ENCODE measurements at regions of chr4 and their contacts with region 1.

Region 1: GRCh38 chr4:158850800-158851644 is 82.2 kb downstream of the FNIP2 start:
- DNase-seq: peak; percentile 70
- H3K4me3 ChIP-seq: no peak overlapping the region
- H3K27ac ChIP-seq: peak overlapping the region in 1 of 2 donors; percentile 20
- H3K4me1 ChIP-seq: no peaks in the 10 kb centered on the region
- H3K27me3 ChIP-seq: no peaks in the 10 kb centered on the region
- CTCF ChIP-seq: peak in 3 of 4 experiments; percentile 81 to 88 (median 81)
- POLR2A ChIP-seq: no peak

Region 2: DNA sequence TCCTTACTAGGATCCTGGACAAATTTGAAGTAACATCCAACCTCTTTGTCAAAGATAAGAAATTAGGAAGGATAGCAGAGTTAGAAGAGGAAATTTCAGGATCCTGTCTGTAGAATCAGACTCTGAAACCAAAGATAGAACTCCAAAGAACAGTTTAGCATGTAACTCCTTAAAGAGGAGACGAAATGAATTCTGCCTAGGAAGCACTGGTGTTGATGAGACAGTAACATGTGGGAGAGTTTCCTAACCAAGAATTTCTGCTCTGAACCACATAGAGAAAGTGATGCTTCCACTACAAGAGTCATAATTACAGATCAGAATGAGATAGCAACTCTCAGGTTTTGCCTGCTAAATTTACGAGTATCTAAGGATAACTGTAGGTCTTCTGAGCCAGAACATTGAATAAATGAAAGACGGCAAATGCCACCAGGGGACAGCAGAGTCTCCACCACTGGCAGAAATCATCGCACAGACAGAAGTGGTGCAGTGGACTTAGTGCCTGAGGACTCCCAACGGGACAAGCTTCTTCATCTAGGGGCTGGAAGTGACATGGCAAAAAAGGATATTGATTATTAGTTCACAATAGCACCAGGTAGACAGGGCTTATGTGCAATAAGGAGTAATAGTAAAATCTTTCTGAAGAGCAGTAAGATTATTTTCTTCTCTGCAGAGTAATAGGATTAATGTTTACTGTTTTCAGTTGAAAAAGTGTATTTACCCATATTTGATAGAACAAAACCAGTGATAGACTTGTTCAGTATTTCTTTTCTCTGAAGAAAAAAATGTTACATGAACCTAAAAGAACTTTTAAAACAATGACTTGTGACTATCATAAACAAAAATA is 121.1 kb before region 1 on chr4:
- intact Hi-C with region 1: loop called (anchors 2 kb)
- DNase-seq: peak; percentile 69
- H3K4me3 ChIP-seq: no peak overlapping the region
- H3K27ac ChIP-seq: no peak overlapping the region
- H3K4me1 ChIP-seq: no peaks in the 10 kb centered on the region
- H3K27me3 ChIP-seq: no peaks in the 10 kb centered on the region
- CTCF ChIP-seq: peak; percentile 67 to 90 (median 88)
- POLR2A ChIP-seq: no peak

Region 3: DNA sequence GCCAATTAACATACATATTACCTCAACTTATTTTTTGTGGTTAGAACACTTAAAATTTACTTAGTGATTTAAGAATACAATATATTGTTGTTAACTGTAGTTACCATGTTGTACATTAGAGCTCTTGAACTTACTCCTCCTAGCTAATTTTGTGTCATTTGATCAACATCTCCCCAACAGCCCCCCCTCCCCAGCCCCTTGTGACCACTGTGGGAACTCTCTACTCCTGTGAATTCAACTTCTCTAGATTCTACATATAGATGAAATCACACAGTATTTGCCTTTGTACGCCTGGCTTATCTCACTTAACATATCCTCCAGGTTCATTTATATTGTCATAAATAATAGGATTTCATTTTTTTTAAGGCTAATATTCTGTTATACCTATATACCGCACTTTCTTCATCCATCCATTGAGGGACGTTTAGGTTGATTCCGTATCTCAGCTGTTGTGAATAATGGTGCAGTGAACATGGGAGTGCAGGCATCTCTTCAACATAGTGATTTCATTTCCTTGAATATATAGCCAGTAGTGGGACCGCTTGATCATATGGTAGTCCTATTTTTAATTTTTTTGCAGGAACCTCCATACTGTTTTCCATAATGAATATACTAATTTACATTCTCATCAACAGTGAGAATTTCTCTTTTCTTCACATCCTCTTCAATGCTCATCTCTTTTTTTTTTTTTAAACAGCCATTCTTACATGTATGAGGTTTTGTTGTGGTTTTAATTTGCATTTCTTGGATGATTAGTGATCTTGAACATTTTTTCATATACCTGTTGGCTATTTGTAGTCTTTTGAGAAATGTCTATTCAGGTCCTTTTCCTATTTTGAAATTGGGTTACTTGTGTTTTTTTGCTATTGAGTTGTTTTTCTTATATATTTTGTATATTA is 318.6 kb after region 1 on chr4:
- intact Hi-C with region 1: no loop called
- DNase-seq: no peak
- H3K4me3 ChIP-seq: no peak overlapping the region
- H3K27ac ChIP-seq: no peak overlapping the region
- H3K4me1 ChIP-seq: no peaks in the 10 kb centered on the region
- H3K27me3 ChIP-seq: no peaks in the 10 kb centered on the region
- CTCF ChIP-seq: no peak
- POLR2A ChIP-seq: no peak

Measured in prostate gland (tissue), 2 donors.